ENCODE measurements at regions of chr6 and their contacts with region 1.

Region 1: DNA sequence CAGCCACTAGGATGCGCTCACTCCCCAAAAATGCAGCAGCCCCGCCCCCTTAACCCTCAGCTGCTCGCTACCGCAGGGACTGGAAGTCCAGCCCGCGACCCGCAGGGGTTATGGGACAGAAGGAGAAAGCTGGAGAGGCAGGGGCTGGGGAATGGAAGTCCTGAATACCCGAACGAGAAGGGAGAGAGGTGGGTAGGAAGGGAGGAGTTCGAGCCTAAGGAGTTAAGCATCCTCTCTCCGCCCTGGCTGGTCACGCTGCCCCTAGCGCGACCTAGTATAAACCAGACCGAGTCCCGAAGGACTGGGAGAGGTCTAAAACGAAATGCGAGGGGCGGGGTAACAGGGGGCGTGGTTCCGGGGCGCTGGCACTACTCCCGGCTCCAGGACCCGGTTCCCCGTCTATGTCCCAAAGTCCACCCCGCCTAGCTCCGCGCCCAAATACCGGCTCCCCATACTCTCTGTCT is 448 bp upstream of the DDAH2 start:
- DNase-seq: peak; percentile 60 to 89 (median 83)
- ATAC-seq: peak; percentile 69
- H3K4me3 ChIP-seq: peak overlapping the region; percentile 79 to 96
- H3K4me3 Mint-ChIP-seq: peak overlapping the region; percentile 97
- H3K27ac ChIP-seq: peak overlapping the region; percentile 11 to 58
- H3K27ac Mint-ChIP-seq: peak overlapping the region; percentile 89
- H3K4me1 ChIP-seq: peaks cover 35% of the 10 kb centered on the region
- H3K4me1 Mint-ChIP-seq: peaks cover 57% of the 10 kb centered on the region
- H3K27me3 ChIP-seq: no peaks in the 10 kb centered on the region
- H3K27me3 Mint-ChIP-seq: no peaks in the 10 kb centered on the region
- CTCF ChIP-seq: peak; percentile 91

Region 2: GRCh38 chr6:31575335-31575901 is 154.1 kb before region 1 on chr6 and contains the start of gene TNF:
- CTCF ChIA-PET with region 1: no interaction called
- POLR2A ChIA-PET with region 1: no interaction called
- intact Hi-C with region 1: no loop called
- DNase-seq: peak in 8 of 9 experiments; percentile 45 to 84 (median 64)
- ATAC-seq: peak; percentile 6
- H3K4me3 ChIP-seq: peak within 1 kb of the TSS; percentile 26 to 71
- H3K4me3 Mint-ChIP-seq: peak within 1 kb of the TSS; percentile 97
- H3K27ac ChIP-seq: peak within 1 kb of the TSS; percentile 57 to 94
- H3K27ac Mint-ChIP-seq: peak within 1 kb of the TSS; percentile 99
- H3K4me1 ChIP-seq: peaks cover 75% of the 10 kb centered on the region
- H3K4me1 Mint-ChIP-seq: peaks cover 88% of the 10 kb centered on the region
- H3K27me3 ChIP-seq: no peaks in the 10 kb centered on the region
- H3K27me3 Mint-ChIP-seq: no peaks in the 10 kb centered on the region
- CTCF ChIP-seq: no peak
- total RNA-seq, gene TNF: 30.1 to 32.7 TPM

Region 3: DNA sequence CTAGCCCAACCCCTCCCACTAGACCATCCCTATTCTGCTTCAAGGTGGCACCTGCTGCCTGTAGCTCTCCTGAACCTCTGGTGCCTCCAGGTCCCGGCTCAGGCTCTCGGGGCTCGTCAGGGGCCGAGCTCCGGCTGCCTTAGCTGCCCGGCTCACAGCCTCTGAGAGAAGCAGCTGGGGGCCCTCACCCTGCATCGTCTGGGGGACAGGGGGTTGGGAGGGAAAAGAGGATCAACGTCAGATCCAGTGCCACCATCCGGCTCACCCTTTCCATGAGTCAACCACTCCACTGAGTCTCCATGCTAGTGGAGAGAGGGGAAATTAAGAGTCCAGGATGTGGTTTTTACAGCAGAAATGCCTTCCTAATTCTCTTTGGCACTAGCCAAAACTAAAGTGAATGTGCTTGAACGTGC is 90.1 kb before region 1 on chr6:
- CTCF ChIA-PET with region 1: no interaction called
- POLR2A ChIA-PET with region 1: no interaction called
- intact Hi-C with region 1: no loop called
- DNase-seq: no peak
- ATAC-seq: no peak
- H3K4me3 ChIP-seq: no peak overlapping the region
- H3K4me3 Mint-ChIP-seq: no peak overlapping the region
- H3K27ac ChIP-seq: no peak overlapping the region
- H3K27ac Mint-ChIP-seq: no peak overlapping the region
- H3K4me1 ChIP-seq: no peaks in the 10 kb centered on the region
- H3K4me1 Mint-ChIP-seq: no peaks in the 10 kb centered on the region
- H3K27me3 ChIP-seq: no peaks in the 10 kb centered on the region
- H3K27me3 Mint-ChIP-seq: no peaks in the 10 kb centered on the region
- CTCF ChIP-seq: no peak

Region 4: DNA sequence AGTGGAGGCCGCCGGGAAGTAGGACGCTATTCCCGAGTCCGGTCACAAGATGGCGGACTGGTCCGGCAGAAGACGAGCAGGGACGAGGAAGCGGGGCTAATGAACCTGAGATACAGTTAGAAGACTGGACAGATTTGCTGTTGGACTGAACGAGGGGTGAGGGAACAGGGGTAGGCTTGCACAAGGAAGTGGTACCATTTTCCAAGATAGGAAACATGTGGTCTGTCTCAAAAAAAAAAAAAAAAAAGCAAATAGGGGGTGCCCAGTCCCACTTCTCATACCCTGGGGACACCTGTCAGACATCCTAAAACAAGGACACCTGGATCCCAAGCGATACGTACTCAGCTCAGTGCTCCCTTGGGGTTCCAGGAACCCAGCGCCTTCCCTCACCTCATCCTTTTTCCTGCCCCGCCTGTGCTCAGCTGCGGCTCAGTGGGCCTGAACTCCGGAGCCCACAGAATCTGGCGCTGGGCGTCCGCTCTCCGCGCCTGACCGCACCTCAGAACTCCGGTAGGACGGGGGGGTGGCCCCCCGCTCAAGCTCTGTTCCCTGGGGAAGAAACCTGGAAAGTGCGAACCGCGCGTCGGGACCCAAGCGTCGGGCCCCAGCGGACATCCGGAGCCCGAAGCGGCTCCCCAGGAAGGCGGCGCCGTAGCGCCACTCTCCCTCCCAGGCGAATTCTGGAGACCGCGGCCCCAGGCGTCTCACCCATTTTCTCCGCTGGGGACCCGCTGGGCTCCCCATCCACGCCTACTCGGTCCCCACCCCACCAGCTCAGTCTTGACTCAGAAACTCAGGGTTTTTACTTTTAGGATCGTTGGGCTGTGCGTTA is 48.5 kb before region 1 on chr6 and contains the start of gene LY6G5C:
- CTCF ChIA-PET with region 1: interaction called, 7 read pairs
- POLR2A ChIA-PET with region 1: no interaction called
- intact Hi-C with region 1: loop called in 1 of 2 experiments (anchors 1 kb)
- DNase-seq: peak; percentile 29 to 80 (median 60)
- ATAC-seq: peak; percentile 75
- H3K4me3 ChIP-seq: peak within 1 kb of the TSS; percentile 71 to 73
- H3K4me3 Mint-ChIP-seq: peak within 1 kb of the TSS; percentile 89
- H3K27ac ChIP-seq: peak within 1 kb of the TSS in 1 of 2 experiments; percentile 60
- H3K27ac Mint-ChIP-seq: peak within 1 kb of the TSS; percentile 72
- H3K4me1 ChIP-seq: peaks cover 12% of the 10 kb centered on the region
- H3K4me1 Mint-ChIP-seq: peaks cover 16% of the 10 kb centered on the region
- H3K27me3 ChIP-seq: no peaks in the 10 kb centered on the region
- H3K27me3 Mint-ChIP-seq: no peaks in the 10 kb centered on the region
- CTCF ChIP-seq: no peak
- total RNA-seq, gene LY6G5C: 1.5 to 1.9 TPM

Region 5: GRCh38 chr6:31769684-31770371 is 40.3 kb after region 1 on chr6:
- CTCF ChIA-PET with region 1: interaction called, 19 read pairs
- POLR2A ChIA-PET with region 1: interaction called, 3 read pairs
- intact Hi-C with region 1: loop called (anchors 1 kb)
- DNase-seq: peak; percentile 63 to 86 (median 80)
- ATAC-seq: peak; percentile 87
- H3K4me3 ChIP-seq: no peak overlapping the region
- H3K4me3 Mint-ChIP-seq: no peak overlapping the region
- H3K27ac ChIP-seq: no peak overlapping the region
- H3K27ac Mint-ChIP-seq: no peak overlapping the region
- H3K4me1 ChIP-seq: peaks cover 25% of the 10 kb centered on the region
- H3K4me1 Mint-ChIP-seq: peaks cover 27% of the 10 kb centered on the region
- H3K27me3 ChIP-seq: no peaks in the 10 kb centered on the region
- H3K27me3 Mint-ChIP-seq: no peaks in the 10 kb centered on the region
- CTCF ChIP-seq: peak; percentile 60

Region 6: GRCh38 chr6:31806465-31807272 is 77.1 kb after region 1 on chr6 and contains the start of gene LSM2:
- CTCF ChIA-PET with region 1: interaction called, 18 read pairs
- POLR2A ChIA-PET with region 1: interaction called, 9 read pairs
- intact Hi-C with region 1: no loop called
- DNase-seq: peak; percentile 92 to 99 (median 97)
- ATAC-seq: peak; percentile 99
- H3K4me3 ChIP-seq: peak within 1 kb of the TSS; percentile 61 to 95
- H3K4me3 Mint-ChIP-seq: peak within 1 kb of the TSS; percentile 87
- H3K27ac ChIP-seq: peak within 1 kb of the TSS; percentile 78 to 82
- H3K27ac Mint-ChIP-seq: peak within 1 kb of the TSS; percentile 94
- H3K4me1 ChIP-seq: peaks cover 8% of the 10 kb centered on the region
- H3K4me1 Mint-ChIP-seq: peaks cover 25% of the 10 kb centered on the region
- H3K27me3 ChIP-seq: no peaks in the 10 kb centered on the region
- H3K27me3 Mint-ChIP-seq: no peaks in the 10 kb centered on the region
- CTCF ChIP-seq: no peak
- total RNA-seq, gene LSM2: 19.6 to 26.4 TPM

Region 7: GRCh38 chr6:31862344-31863227 is 133.0 kb after region 1 on chr6 and contains the start of gene NEU1:
- CTCF ChIA-PET with region 1: interaction called, 5 read pairs
- POLR2A ChIA-PET with region 1: no interaction called
- intact Hi-C with region 1: loop called in 1 of 2 experiments (anchors 1 kb)
- DNase-seq: peak; percentile 97 to 100 (median 98)
- ATAC-seq: peak; percentile 91
- H3K4me3 ChIP-seq: peak within 1 kb of the TSS; percentile 75 to 94
- H3K4me3 Mint-ChIP-seq: peak within 1 kb of the TSS; percentile 95
- H3K27ac ChIP-seq: peak within 1 kb of the TSS; percentile 77 to 97
- H3K27ac Mint-ChIP-seq: peak within 1 kb of the TSS; percentile 98
- H3K4me1 ChIP-seq: peaks cover 17% of the 10 kb centered on the region
- H3K4me1 Mint-ChIP-seq: peaks cover 23% of the 10 kb centered on the region
- H3K27me3 ChIP-seq: no peaks in the 10 kb centered on the region
- H3K27me3 Mint-ChIP-seq: no peaks in the 10 kb centered on the region
- CTCF ChIP-seq: no peak
- total RNA-seq, gene NEU1: 30.0 to 30.2 TPM

Measured in CD8-positive, alpha-beta T cell (primary cell).